Right ventricle myocardium superior (tissue), 1 donor: ENCODE measurements at regions of chr2 and their contacts with region 1.

Region 1: GRCh38 chr2:175282290-175282689 is 100.8 kb upstream of the ATP5MC3 start:
- DNase-seq: no peak
- ATAC-seq: peak; percentile 77

Region 2: DNA sequence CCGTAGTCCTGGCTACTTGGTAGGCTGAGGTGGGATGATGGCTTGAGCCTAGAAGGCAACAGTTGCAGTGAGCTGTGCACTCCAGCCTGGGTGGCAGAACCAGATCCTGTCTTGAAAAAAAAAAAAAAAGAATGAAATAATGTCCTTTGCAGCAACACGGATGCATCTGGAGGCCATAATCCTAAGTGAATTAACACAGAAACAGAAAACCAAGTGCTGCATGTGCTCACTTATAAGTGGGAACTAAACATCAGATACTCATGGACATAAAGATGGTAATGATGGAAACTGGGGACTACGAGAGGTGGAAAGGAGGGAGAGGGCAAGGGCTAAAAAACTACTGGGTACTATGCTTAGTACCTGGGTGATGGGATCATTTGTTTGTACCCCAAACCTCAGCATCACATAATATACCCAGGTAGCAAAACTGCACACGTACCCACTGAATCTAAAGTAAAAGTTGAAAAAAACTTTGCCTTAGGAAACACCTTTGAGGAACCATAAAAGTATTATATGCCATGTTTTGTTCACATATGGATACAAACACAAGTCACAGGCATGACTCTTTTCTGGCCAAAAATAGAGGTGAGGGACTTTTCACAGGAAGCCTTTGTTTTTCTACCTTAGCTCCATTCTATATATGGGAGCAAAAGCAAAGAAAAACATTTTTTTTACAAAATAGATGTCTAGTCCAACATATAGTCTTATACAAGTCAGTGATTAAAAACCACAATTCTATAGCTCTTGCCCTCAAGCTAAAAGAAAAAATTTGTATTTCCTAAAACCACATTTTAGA is 832.1 kb before region 1 on chr2:
- intact Hi-C with region 1: no loop called
- DNase-seq: no peak
- ATAC-seq: no peak

Region 3: DNA sequence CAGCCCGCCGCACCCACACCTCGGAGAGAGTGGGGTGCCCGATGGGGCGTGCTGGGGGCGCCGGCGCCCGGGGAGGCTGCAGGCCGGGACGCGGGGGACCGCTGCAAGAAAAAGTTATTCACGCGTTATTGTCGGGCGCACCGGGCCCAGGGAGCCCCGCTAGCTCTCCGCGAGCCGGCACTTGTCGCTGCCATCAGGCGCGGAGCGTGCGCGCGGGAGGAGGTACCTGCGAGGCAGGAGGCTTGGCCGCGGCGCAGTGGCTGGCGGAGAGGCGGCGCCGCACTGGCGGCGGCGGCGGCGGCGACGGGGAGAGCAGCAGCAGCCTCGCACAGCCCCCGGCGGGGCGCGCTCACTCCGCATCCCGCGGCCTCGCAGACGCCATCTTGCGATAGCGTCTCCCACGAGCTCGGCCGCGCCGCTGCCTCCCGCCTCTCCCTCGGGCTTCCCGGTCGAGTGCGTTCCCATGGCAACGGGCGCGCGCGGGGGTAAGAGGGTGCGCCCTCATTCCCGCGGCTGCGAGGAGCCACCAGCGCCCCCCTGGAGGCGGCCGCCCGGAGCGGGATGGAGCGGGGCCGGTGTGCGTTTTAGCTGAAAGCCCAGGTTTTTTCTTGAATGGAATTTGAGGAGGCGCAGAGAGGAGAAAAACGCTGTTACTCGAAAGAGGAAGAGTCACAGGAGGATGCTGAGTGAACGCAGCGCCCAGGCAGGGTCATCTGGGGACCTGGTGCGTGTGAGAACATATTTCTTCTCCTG is 277.1 kb before region 1 on chr2 and contains the start of gene CHN1:
- intact Hi-C with region 1: no loop called
- DNase-seq: peak; percentile 90
- ATAC-seq: peak; percentile 86
- total RNA-seq, gene CHN1: 9.2 TPM

Region 4: GRCh38 chr2:175030380-175031271 is 251.7 kb before region 1 on chr2:
- intact Hi-C with region 1: loop called (anchors 10 kb)
- DNase-seq: no peak
- ATAC-seq: peak; percentile 69

Region 5: GRCh38 chr2:175203621-175204496 is 78.4 kb before region 1 on chr2:
- intact Hi-C with region 1: loop called (anchors 5 kb)
- DNase-seq: peak; percentile 46
- ATAC-seq: peak; percentile 78

Region 6: GRCh38 chr2:175326801-175327200 is 44.5 kb after region 1 on chr2:
- intact Hi-C with region 1: no loop called
- DNase-seq: no peak
- ATAC-seq: no peak

Region 7: GRCh38 chr2:175342085-175342484 is 59.8 kb after region 1 on chr2:
- intact Hi-C with region 1: no loop called
- DNase-seq: no peak
- ATAC-seq: no peak